ENCODE measurements at regions of chr10 and their contacts with region 1.

Region 1: DNA sequence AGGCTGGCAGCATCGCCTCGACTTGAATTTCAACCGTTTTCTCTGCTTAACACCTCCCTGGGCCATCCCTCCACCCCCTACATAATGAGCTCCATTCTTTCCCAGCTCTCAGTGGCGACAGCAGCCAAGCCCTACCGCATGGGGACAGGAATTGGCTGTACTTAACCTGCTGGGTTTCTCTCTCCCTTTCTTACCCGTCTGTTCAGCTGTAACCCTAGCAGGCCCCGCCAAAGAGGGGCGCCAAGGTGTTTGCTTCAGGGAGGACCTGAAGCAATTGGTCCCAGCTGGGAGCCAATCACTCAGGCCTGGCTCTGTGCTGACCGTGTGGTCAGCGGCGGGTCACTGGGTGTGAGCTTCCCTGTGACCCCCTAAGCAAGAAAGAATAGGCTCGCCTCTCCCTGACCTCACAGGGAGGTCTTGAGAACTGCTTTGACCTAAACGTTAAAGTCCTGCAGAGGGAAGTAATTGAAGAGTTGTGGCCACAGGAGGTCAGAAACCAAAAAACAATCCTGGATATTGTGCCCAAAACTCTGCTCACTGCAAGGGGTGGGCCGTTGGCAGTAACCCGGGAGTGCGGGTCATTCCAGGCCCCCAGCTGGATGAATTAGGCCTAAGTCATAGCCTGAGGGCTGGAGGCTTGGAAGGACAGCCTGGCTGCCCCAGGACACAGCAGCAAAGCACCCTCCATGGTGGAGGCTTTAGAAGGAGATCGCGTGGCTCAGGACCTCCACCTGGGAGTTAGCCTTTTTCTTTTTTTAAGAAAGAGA is 114.6 kb downstream of the ITIH5 start:
- DNase-seq: no peak
- H3K4me3 ChIP-seq: no peak overlapping the region
- H3K27ac ChIP-seq: no peak overlapping the region
- H3K4me1 ChIP-seq: peaks cover 0 to 9% (median 2%) of the 10 kb centered on the region in 4 experiments; a peak in 5 of 7 replicates
- H3K27me3 ChIP-seq: no peaks in the 10 kb centered on the region
- CTCF ChIP-seq: peak in 1 of 3 experiments; percentile 7; a peak in 1 of 4 replicates
- EP300 ChIP-seq: no peak
- POLR2A ChIP-seq: no peak
- RAD21 ChIP-seq: no peak; a peak in 1 of 4 replicates

Region 2: GRCh38 chr10:7563368-7563767 is 11.2 kb after region 1 on chr10:
- CTCF ChIA-PET with region 1: interaction called, 10 read pairs
- POLR2A ChIA-PET with region 1: no interaction called
- DNase-seq: no peak
- H3K4me3 ChIP-seq: no peak overlapping the region
- H3K27ac ChIP-seq: no peak overlapping the region
- H3K4me1 ChIP-seq: peaks cover 0 to 16% (median 5%) of the 10 kb centered on the region in 4 experiments; a peak in 5 of 7 replicates
- H3K27me3 ChIP-seq: no peaks in the 10 kb centered on the region
- CTCF ChIP-seq: no peak
- EP300 ChIP-seq: no peak
- POLR2A ChIP-seq: no peak
- RAD21 ChIP-seq: no peak

Measured in H1 (cell line).